PC-3 (cell line): ENCODE measurements at regions of chr2 and their contacts with region 1.

Region 1: GRCh38 chr2:150487537-150488429 is at the start of gene RND3:
- DNase-seq: peak; percentile 99
- ATAC-seq: peak; percentile 46
- H3K4me3 ChIP-seq: peak within 1 kb of the TSS; percentile 90
- H3K27ac ChIP-seq: peak within 1 kb of the TSS; percentile 98
- H3K4me1 ChIP-seq: peaks cover 42% of the 10 kb centered on the region
- H3K27me3 ChIP-seq: no peaks in the 10 kb centered on the region
- CTCF ChIP-seq: peak; percentile 93
- total RNA-seq, gene RND3: 145 and 201 TPM in 2 replicates

Region 2: DNA sequence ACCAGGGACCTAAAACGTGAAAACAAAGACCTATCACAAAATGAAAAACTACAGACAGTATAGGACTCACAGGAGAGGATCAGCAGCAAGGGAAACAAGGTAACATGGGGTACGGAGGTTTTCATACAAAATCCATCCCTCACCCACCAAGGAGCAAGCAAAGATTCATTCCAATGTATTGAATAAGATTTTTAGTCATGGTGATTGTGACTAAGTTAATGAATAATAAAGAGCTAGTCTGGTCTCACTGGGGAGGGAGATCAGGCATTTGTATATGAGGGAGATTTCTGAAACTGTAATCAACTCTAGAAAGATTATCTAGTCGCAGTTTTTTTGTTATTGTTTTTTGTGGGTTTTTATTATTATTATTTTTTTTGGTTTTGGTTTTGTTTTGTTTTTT is 563.8 kb before region 1 on chr2:
- CTCF ChIA-PET with region 1: no interaction called
- POLR2A ChIA-PET with region 1: no interaction called
- intact Hi-C with region 1: loop called (anchors 10 kb)
- DNase-seq: peak; percentile 61
- ATAC-seq: no peak
- H3K4me3 ChIP-seq: no peak overlapping the region
- H3K27ac ChIP-seq: peak overlapping the region; percentile 82
- H3K4me1 ChIP-seq: peaks cover 31% of the 10 kb centered on the region
- H3K27me3 ChIP-seq: no peaks in the 10 kb centered on the region
- CTCF ChIP-seq: no peak

Region 3: GRCh38 chr2:149984311-149984710 is 503.5 kb before region 1 on chr2:
- CTCF ChIA-PET with region 1: no interaction called
- POLR2A ChIA-PET with region 1: no interaction called
- intact Hi-C with region 1: no loop called
- DNase-seq: no peak
- ATAC-seq: no peak
- H3K4me3 ChIP-seq: no peak overlapping the region
- H3K27ac ChIP-seq: no peak overlapping the region
- H3K4me1 ChIP-seq: peaks cover 18% of the 10 kb centered on the region
- H3K27me3 ChIP-seq: no peaks in the 10 kb centered on the region
- CTCF ChIP-seq: no peak

Region 4: DNA sequence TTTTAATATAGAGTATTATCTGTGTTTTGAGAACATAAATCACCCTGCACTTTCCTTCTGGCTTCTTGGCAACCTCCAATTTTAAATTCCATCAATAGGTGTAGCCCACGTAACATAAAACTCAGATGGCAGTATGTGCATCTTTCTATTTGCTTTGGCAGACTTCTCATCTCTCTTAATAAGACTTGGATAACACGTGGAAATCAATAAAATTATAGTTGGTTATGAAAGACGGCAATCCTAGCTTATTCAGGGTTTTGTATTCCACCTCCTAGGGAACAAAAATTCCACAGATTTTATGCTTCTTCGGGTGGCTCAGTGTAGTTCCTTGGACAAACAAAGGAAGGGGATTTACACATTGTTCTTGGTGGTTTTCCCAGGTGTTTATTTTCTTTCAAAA is 299.6 kb before region 1 on chr2:
- CTCF ChIA-PET with region 1: no interaction called
- POLR2A ChIA-PET with region 1: interaction called, 12 read pairs
- intact Hi-C with region 1: no loop called
- DNase-seq: peak; percentile 93
- ATAC-seq: peak; percentile 91
- H3K4me3 ChIP-seq: peak overlapping the region; percentile 26; the same call in 1 of the 2 replicates
- H3K27ac ChIP-seq: peak overlapping the region; percentile 79
- H3K4me1 ChIP-seq: peaks cover 23% of the 10 kb centered on the region
- H3K27me3 ChIP-seq: no peaks in the 10 kb centered on the region
- CTCF ChIP-seq: peak; percentile 43

Region 5: DNA sequence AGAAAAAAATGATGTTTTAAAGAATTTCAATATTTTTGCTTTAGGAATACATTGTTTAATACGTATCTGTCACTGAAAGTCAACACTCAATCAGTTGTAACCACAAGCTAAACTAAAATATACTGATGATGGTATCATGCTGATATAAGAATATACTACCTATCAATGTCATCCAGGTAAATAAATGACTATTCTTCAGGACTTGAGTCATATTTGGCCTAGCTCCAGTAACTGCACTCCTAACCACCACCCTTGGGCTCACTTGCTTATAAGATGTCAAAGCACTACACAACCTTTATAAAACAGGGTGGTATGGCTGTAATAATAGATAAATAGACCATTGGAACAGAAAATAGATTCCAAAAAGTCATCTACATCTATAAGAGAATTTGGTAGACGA is 49.1 kb before region 1 on chr2:
- CTCF ChIA-PET with region 1: no interaction called
- POLR2A ChIA-PET with region 1: no interaction called
- intact Hi-C with region 1: no loop called
- DNase-seq: peak; percentile 92
- ATAC-seq: peak; percentile 94
- H3K4me3 ChIP-seq: no peak overlapping the region
- H3K27ac ChIP-seq: peak overlapping the region; percentile 42
- H3K4me1 ChIP-seq: peaks cover 12% of the 10 kb centered on the region
- H3K27me3 ChIP-seq: no peaks in the 10 kb centered on the region
- CTCF ChIP-seq: no peak

Region 6: DNA sequence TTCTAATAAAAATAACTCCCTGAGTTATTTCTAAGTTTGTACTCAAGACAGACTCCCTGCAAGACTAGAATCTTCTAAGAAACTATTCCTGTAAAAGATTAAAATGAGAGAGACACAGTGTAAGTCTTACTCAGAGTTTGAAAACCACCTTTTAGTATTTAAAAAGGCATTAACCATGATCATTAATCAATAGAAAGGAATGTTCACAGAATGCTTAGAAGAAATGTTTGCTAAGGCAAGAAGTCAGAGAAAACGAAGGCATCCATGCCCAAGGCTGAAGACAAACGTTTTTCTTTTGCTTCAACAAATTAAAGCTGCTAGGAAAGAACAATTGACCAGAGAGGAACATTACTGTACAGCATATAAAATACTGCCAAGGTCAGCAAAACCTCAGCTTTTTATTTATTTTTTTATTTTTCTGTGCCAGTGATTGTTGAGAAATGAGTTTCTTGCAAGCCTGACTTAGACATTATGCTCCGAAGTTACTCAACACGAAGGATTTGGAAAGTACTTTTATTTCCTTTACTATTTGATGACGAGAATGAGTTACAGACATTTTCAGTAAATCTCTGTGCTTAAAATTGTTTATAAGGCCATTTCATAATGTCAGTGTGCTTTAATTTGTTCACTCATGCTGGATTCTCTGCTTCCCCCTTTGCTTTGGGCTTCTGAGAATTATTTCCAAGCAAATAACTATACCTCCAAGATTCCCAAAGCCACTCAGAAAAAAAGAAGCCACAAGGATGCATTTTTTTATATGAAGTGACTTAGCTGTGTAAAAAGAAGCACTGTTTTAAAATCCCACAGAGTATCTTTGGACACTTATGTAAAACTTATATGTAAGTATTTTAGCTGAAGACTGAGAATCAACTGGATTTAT is 20.8 kb before region 1 on chr2:
- CTCF ChIA-PET with region 1: no interaction called
- POLR2A ChIA-PET with region 1: no interaction called
- intact Hi-C with region 1: no loop called
- DNase-seq: peak; percentile 63
- ATAC-seq: peak; percentile 7
- H3K4me3 ChIP-seq: no peak overlapping the region
- H3K27ac ChIP-seq: peak overlapping the region; percentile 16
- H3K4me1 ChIP-seq: peaks cover 56% of the 10 kb centered on the region
- H3K27me3 ChIP-seq: no peaks in the 10 kb centered on the region
- CTCF ChIP-seq: no peak

Region 7: DNA sequence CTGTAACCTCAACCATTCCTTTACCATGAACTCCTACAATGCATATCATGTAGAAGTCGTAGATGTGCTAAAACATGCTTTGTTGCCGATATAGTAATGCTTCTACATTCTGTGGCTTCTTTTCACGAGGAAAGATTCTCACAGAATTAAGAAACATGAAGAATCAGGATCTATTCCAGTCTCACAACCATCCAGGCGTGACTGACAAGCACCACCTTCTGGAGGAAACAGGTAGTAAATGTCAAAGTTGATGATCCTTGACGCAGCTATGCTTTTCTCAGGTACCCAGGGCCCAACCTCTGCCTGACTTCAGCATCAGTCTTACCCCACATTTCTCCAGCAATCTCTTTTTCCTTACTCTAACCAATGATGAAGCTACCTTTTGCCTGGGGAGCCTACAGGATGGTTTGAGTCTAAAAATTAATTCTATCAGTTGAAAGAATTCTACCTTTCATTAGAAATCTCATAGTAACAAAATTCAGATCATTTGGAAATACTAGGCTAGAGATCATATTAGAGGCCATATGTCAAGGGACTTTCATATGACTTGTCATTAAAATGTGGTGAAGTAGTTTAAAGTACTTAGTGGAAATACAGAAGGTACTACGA is 123.0 kb after region 1 on chr2:
- CTCF ChIA-PET with region 1: no interaction called
- POLR2A ChIA-PET with region 1: no interaction called
- intact Hi-C with region 1: loop called (anchors 1 kb)
- DNase-seq: peak; percentile 85
- ATAC-seq: peak; percentile 70
- H3K4me3 ChIP-seq: no peak overlapping the region
- H3K27ac ChIP-seq: 0 out of 2 replicates have a peak overlapping the region, but pooled peaks have one; percentile 6
- H3K4me1 ChIP-seq: peaks cover 19% of the 10 kb centered on the region
- H3K27me3 ChIP-seq: no peaks in the 10 kb centered on the region
- CTCF ChIP-seq: peak; percentile 85

Region 8: DNA sequence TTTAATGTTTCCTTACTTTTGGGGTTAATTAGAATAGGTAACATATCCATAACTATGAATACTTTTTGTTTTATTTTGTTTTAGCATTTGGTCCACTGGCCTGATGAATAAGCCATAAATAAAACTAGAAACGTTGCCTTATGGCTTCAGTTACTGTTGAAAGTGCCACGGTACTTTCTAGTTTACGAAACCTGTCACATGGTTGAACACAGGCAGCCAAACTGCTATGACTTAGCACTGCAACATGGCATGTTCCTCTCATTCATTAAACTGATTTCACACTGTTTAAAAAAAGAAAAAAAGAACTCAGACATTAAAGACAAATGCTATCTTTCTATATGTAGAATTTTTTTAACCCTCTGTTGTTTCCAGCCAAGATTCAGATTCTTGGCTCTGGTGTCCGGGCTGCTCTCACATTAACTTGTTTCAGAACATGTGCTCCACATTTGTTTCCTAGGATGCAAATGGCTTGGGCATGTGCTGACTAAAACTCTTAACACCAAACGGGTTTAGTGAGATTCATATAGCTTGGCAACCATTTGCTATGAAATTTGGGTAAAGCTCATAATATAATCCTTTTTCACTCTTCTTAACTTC is 323.6 kb after region 1 on chr2:
- CTCF ChIA-PET with region 1: no interaction called
- POLR2A ChIA-PET with region 1: no interaction called
- intact Hi-C with region 1: loop called (anchors 2 kb)
- DNase-seq: peak; percentile 17
- ATAC-seq: no peak
- H3K4me3 ChIP-seq: no peak overlapping the region
- H3K27ac ChIP-seq: peak overlapping the region; percentile 88; the same call in 1 of the 2 replicates
- H3K4me1 ChIP-seq: peaks cover 20% of the 10 kb centered on the region
- H3K27me3 ChIP-seq: no peaks in the 10 kb centered on the region
- CTCF ChIP-seq: no peak

Region 9: DNA sequence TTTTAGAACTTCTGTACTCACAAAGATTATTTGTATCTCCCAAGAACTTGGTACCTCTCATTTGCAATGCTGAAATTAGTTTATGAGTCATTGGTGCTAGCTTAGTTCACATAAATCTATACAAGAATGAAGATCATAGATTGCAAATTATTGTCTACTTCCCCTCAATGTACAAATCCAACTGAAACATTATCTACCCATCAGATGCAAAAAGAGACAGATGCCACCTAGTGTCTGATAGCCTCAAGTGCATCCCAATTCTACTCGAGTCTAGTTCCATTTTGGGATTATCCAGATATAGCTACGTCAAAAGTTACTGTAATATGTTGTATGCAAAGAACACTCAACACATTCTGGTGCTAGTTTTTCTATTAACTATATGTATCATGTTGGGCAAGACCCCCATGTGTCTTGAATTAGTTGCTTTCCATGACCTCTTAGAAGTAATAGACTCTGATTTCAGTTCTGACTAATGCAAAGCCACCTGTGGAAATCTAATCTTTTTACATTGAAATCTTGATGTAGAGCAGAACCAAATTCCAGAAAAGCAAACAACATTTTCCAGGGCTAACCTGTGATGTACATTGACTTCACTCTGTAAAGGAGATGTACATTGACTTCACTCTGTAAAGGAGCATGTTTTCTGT is 563.9 kb after region 1 on chr2:
- CTCF ChIA-PET with region 1: no interaction called
- POLR2A ChIA-PET with region 1: no interaction called
- intact Hi-C with region 1: loop called (anchors 5 kb)
- DNase-seq: peak; percentile 80
- ATAC-seq: peak; percentile 27
- H3K4me3 ChIP-seq: no peak overlapping the region
- H3K27ac ChIP-seq: no peak overlapping the region
- H3K4me1 ChIP-seq: peaks cover 46% of the 10 kb centered on the region
- H3K27me3 ChIP-seq: no peaks in the 10 kb centered on the region
- CTCF ChIP-seq: peak; percentile 94